Activated CD4-positive, alpha-beta T cell treated with anti-CD3 and anti-CD28 coated beads for 36 hours (primary cell): ENCODE measurements at regions of chr22 and their contacts with region 1.

Region 1: DNA sequence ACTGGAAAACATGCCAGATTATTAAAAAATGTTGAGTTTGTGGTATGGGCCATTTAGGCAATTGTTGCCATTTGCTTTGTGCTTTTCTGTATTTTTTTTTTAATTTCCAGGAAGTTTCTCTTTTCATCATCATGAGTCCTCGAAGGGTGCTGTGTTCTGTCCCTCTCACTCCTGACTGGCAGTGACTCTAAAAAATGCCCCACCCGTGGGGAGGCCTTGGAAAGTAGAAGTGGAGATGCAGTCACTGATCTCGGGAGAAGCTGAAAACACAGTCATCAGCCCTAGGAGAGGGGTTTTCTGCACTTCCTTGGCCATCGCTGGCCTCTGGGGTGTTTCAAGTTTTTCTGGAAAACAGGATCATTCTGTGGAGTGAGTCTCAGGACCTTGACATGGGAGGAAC is 98.5 kb upstream of the GRK3 start:
- DNase-seq: no peak
- ATAC-seq: no peak
- H3K4me3 Mint-ChIP-seq: no peak overlapping the region
- H3K27ac Mint-ChIP-seq: no peak overlapping the region
- H3K4me1 Mint-ChIP-seq: no peaks in the 10 kb centered on the region
- H3K27me3 Mint-ChIP-seq: no peaks in the 10 kb centered on the region

Region 2: GRCh38 chr22:25235547-25236290 is 230.2 kb before region 1 on chr22:
- CTCF ChIA-PET with region 1: no interaction called
- POLR2A ChIA-PET with region 1: no interaction called
- intact Hi-C with region 1: no loop called
- DNase-seq: peak; percentile 90
- ATAC-seq: peak; percentile 95
- H3K4me3 Mint-ChIP-seq: no peak overlapping the region
- H3K27ac Mint-ChIP-seq: no peak overlapping the region
- H3K4me1 Mint-ChIP-seq: peaks cover 5% of the 10 kb centered on the region
- H3K27me3 Mint-ChIP-seq: peaks cover 41% of the 10 kb centered on the region

Region 3: DNA sequence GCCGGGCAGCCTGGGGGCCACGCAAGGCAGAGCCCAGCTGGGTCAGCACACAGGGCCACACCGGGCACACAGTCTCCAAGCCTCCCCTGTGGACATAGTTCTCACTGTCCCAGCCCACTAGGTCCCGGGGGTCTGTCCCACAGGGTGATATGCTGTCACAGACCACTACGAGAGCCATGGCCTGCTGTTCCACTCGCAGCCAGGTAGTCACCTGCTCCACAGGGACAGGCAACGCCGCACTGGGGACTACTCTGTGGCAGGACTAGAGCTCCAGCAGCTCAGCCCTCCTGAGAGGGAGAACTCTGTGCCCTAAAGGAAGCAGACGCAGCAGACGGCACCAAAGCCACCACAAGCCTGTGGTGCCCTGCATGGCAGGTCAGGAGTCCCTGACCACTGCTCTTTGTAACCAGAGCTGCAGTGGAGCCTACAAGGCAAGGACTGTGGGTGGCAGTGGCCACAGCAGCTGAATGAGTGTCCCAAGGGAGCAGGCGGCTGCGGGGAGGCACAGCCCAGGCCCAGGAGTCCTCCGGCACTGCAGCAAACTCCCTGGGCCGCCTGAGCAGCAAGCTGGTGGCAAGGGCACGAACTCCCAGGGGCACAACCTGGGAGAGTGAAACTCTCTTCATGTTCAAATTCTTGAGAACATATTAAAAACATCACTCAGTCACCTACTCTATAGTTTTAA is 72.7 kb before region 1 on chr22:
- CTCF ChIA-PET with region 1: no interaction called
- POLR2A ChIA-PET with region 1: no interaction called
- intact Hi-C with region 1: no loop called
- DNase-seq: no peak
- ATAC-seq: no peak
- H3K4me3 Mint-ChIP-seq: no peak overlapping the region
- H3K27ac Mint-ChIP-seq: no peak overlapping the region
- H3K4me1 Mint-ChIP-seq: peaks cover 41% of the 10 kb centered on the region
- H3K27me3 Mint-ChIP-seq: no peaks in the 10 kb centered on the region

Region 4: GRCh38 chr22:25404928-25405816 is 60.8 kb before region 1 on chr22:
- CTCF ChIA-PET with region 1: no interaction called
- POLR2A ChIA-PET with region 1: no interaction called
- intact Hi-C with region 1: no loop called
- DNase-seq: peak; percentile 81
- ATAC-seq: peak; percentile 85
- H3K4me3 Mint-ChIP-seq: peak overlapping the region; percentile 86
- H3K27ac Mint-ChIP-seq: peak overlapping the region; percentile 58
- H3K4me1 Mint-ChIP-seq: peaks cover 25% of the 10 kb centered on the region
- H3K27me3 Mint-ChIP-seq: no peaks in the 10 kb centered on the region

Region 5: GRCh38 chr22:25419237-25420113 is 46.5 kb before region 1 on chr22:
- CTCF ChIA-PET with region 1: no interaction called
- POLR2A ChIA-PET with region 1: no interaction called
- intact Hi-C with region 1: no loop called
- DNase-seq: no peak
- ATAC-seq: no peak
- H3K4me3 Mint-ChIP-seq: peak overlapping the region; percentile 21
- H3K27ac Mint-ChIP-seq: no peak overlapping the region
- H3K4me1 Mint-ChIP-seq: peaks cover 23% of the 10 kb centered on the region
- H3K27me3 Mint-ChIP-seq: peaks cover 50% of the 10 kb centered on the region

Region 6: DNA sequence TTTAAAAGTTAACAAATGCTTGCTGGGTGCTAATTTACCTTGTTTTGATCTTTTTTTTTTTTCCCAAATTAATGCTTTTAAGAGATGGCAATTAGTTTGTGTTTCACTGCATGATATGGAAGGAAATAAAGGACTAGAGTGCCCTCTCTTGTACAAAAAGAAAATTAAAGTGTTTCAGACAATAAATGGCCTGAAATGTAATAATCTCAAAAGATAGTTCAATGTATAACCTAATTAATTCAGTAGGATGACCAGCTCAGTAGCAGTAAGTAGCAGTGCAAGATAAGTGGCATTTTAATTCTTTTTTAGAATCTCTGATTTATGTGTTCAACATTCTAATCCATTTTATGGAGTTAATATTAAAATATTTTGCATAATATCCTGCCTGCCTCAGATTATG is 236.1 kb after region 1 on chr22:
- CTCF ChIA-PET with region 1: interaction called, 6 read pairs
- POLR2A ChIA-PET with region 1: no interaction called
- intact Hi-C with region 1: loop called (anchors 1 kb)
- DNase-seq: no peak
- ATAC-seq: no peak
- H3K4me3 Mint-ChIP-seq: no peak overlapping the region
- H3K27ac Mint-ChIP-seq: no peak overlapping the region
- H3K4me1 Mint-ChIP-seq: peaks cover 13% of the 10 kb centered on the region
- H3K27me3 Mint-ChIP-seq: no peaks in the 10 kb centered on the region

Region 7: DNA sequence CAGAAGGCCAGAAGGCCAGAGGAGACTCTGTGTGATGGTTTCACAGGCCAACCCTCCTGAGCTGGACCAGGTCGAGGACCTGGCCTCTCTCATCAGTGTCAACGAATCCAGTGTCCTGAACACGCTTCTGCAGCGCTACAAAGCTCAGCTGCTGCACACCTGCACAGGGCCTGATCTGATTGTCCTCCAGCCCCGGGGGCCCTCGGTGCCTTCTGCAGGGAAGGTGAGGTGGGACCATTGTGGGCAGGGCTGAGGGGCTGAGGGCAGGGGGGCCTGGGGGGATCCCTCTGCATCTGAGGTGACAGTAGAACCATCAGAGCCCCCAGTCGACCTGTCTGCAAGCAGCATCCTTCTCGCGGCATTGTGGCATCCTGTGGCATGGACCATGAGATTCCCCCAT is 306.3 kb after region 1 on chr22:
- CTCF ChIA-PET with region 1: interaction called, 37 read pairs
- POLR2A ChIA-PET with region 1: no interaction called
- intact Hi-C with region 1: loop called (anchors 1 kb)
- DNase-seq: no peak
- ATAC-seq: no peak
- H3K4me3 Mint-ChIP-seq: no peak overlapping the region
- H3K27ac Mint-ChIP-seq: no peak overlapping the region
- H3K4me1 Mint-ChIP-seq: peaks cover 12% of the 10 kb centered on the region
- H3K27me3 Mint-ChIP-seq: peaks cover 2% of the 10 kb centered on the region

Region 8: DNA sequence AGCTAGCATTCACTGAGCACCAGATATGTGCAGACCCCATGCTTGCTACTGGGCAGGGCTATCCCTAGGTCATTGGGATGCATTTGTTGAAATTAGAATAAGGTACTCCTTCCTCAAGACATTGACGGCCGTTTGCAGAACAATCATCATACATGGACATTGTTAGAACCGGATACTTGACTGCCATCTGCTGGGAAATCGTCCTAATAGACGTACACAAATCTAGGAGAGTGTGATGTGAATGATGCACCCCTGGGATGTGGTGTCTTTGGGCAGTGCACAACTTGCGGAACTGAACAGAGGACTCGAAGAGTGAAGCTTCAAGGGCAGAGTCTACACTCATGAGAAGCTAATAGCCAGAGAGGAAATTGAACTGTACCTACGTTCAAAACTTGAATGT is 311.9 kb after region 1 on chr22:
- CTCF ChIA-PET with region 1: interaction called, 37 read pairs
- POLR2A ChIA-PET with region 1: no interaction called
- intact Hi-C with region 1: loop called (anchors 1 kb)
- DNase-seq: peak; percentile 16
- ATAC-seq: no peak
- H3K4me3 Mint-ChIP-seq: no peak overlapping the region
- H3K27ac Mint-ChIP-seq: no peak overlapping the region
- H3K4me1 Mint-ChIP-seq: peaks cover under 1% of the 10 kb centered on the region
- H3K27me3 Mint-ChIP-seq: peaks cover 2% of the 10 kb centered on the region